Activated CD4-positive, alpha-beta T cell treated with anti-CD3 and anti-CD28 coated beads for 36 hours (primary cell): ENCODE measurements at regions of chr11 and their contacts with region 1.

Region 1: DNA sequence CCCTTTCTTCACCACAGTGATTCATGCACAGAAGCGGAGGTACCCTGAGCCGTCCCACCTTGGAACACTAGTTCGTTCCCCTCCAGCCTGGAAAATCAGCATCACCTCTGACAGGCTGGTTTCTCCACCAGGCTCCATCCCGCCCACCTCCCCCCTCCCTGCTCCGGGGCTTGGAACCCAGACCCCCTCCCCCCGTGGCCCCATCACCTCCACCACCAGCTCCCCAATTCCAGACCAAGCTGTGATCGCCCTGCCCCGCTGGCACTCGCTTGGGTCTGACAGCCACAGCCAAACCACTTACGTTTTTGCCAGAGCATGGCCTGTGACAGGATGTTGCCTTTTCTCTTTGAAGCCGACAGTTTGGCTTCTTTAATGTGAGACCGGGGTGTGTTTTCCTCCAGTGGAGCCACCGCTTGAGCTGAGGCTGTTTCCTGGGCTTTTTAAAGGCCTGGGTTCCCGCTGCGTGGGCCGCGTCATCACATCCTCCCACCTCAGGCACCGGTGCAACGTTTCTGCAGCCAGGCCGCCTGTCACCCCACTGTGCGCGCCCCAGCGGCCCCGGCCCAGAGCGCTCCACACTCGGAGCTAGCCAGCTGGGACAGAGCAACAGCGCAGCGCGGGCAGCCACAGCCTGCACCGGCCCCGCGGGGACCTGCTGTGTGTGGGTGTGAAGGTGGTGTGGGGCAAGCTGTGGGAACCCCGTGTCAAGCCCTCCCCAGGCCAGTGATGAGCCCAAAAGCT is at the start of gene POU2AF1:
- DNase-seq: peak; percentile 91
- ATAC-seq: peak; percentile 77
- H3K4me3 Mint-ChIP-seq: peak within 1 kb of the TSS; percentile 69
- H3K27ac Mint-ChIP-seq: peak within 1 kb of the TSS; percentile 74
- H3K4me1 Mint-ChIP-seq: peaks cover 61% of the 10 kb centered on the region
- H3K27me3 Mint-ChIP-seq: no peaks in the 10 kb centered on the region
- total RNA-seq, gene POU2AF1: 9.6 to 10.0 TPM

Region 2: DNA sequence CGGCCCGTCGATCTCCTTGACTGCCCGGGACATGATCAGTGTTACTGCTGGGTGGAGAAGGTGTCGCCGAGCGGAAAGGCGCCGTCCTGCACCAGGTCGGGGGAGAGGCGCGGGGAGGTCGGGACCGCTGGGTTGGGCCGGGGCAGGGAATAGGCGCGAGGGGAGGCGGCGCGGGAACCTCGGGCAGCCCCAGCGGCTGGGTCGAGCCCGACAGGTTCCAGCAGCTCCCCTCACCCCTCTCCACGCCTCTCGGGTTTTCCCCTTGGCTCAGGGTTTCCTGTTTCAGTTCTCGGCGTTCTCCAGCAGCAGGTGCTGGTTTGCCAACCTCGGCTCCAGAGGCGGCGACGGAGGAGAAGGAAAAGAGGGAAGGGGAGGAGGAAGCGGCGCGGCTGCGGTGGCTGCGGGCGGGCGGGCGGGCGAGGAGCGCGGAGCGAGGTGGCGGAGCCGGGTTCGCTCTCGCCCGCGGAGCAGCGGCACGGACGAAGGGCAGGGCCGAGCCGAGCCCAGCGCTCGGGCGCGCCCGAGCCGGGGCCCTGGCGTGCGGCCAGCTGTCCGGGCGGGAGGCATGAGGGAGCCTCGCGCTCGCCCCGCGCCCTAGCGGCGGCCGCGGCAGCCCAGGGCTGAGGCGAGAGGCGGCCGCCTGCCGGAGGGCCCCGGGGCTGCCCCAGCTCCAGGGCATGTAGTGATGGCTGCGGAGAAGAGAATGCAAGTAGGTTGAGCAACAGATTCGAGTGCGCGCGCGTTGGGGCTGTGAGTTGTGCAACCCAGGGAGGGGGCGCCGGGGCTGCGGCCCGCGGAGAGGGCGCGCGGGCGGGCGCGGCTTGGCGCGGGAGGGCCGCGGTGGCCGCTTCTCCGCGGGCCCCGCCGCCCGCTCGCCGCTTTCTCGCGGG is 1286.3 kb before region 1 on chr11 and contains the start of gene ZC3H12C:
- CTCF ChIA-PET with region 1: no interaction called
- POLR2A ChIA-PET with region 1: no interaction called
- intact Hi-C with region 1: loop called in 1 of 2 experiments (anchors 10 kb)
- DNase-seq: peak; percentile 74
- ATAC-seq: peak; percentile 73
- H3K4me3 Mint-ChIP-seq: peak within 1 kb of the TSS; percentile 74
- H3K27ac Mint-ChIP-seq: peak within 1 kb of the TSS; percentile 52
- H3K4me1 Mint-ChIP-seq: peaks cover 10% of the 10 kb centered on the region
- H3K27me3 Mint-ChIP-seq: peaks cover 49% of the 10 kb centered on the region
- total RNA-seq, gene ZC3H12C: 1.6 TPM

Region 3: DNA sequence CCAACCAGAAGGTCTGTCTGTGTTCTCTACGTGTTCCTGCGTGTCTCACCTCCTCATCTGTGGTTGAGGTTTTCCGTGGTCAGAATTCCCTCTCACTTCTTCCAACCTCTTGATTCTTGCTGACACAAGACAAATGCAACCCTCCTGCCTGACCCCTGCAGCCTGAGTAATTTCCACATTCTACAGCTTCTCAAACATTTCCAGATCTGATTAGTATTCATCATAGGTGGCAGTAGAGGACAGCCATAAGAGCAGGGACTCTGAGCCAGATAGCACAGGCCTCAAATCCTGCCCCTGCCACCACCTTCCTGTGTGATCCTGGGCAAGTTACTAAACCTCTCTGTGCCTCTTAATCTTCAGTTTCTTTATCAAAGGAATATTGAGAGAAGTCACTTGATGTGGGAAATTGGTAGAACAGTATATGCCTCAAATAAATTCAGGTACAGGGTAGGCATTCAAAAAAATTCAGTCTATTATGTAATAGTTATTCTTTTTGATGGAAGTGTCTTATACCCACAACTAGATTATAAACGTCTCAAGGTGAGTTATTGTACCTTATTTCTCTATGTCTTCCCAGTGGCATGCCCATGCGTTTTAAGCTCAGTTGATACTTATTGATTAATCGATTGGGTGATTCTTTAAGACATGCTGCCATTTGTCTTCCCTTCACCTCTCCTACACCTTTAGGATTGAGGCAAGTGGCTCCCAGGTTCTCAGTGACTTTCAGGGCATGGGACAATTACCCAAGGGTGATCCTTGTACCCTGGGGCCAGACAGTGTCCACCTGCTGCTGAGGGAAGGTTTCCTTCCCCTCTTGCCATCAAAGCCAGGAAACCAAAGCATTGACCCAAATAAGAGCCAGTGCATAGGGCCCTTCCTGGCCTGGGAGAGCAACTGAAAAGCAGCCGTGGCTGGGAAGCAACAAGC is 19.5 kb before region 1 on chr11:
- CTCF ChIA-PET with region 1: no interaction called
- POLR2A ChIA-PET with region 1: no interaction called
- intact Hi-C with region 1: loop called in 1 of 2 experiments (anchors 2 kb)
- DNase-seq: peak; percentile 39
- ATAC-seq: peak; percentile 83
- H3K4me3 Mint-ChIP-seq: no peak overlapping the region
- H3K27ac Mint-ChIP-seq: no peak overlapping the region
- H3K4me1 Mint-ChIP-seq: peaks cover 2% of the 10 kb centered on the region
- H3K27me3 Mint-ChIP-seq: no peaks in the 10 kb centered on the region

Region 4: GRCh38 chr11:111422494-111423249 is 43.6 kb after region 1 on chr11:
- CTCF ChIA-PET with region 1: interaction called, 3 read pairs
- POLR2A ChIA-PET with region 1: no interaction called
- intact Hi-C with region 1: loop called in 1 of 2 experiments (anchors 1 kb)
- DNase-seq: peak; percentile 81
- ATAC-seq: peak; percentile 94
- H3K4me3 Mint-ChIP-seq: no peak overlapping the region
- H3K27ac Mint-ChIP-seq: no peak overlapping the region
- H3K4me1 Mint-ChIP-seq: peaks cover 4% of the 10 kb centered on the region
- H3K27me3 Mint-ChIP-seq: no peaks in the 10 kb centered on the region

Region 5: DNA sequence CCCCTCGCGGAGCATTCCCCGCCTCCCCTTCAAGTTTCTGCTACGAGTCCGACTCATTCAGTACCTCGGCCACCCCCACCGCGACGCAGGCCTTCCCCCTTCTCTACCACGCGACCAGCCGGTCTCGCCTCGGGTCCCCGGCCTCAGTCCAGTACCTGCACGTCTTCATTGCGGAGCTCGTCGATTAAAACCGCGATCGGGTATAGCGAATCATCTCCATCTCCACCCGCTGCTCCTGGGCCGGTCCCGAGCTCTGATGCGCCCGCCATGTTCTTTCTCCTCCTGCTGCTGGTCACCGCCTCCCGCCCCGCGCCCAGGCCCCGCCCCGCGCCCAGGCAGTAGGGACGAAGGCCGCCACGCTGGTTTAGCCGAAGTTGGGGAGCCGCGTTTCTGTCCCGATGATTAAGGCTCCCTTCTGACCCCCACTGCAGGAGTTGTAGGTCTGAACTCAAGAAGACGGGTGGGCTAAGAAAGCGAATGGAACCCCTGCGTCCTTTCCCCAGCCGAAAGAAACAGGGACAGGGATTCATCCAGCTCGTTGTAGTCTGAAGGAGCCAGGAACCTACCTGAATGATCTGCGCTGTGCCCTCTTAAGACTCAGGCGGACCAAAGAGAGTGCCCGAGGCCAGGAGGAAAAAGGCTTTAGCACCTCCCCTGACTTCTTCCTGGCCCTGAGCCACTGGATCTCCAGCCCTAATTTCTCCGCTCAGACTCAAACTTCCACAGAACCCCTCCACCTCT is 387.2 kb after region 1 on chr11 and contains the start of gene PPP2R1B:
- CTCF ChIA-PET with region 1: no interaction called
- POLR2A ChIA-PET with region 1: no interaction called
- intact Hi-C with region 1: loop called in 1 of 2 experiments (anchors 10 kb)
- DNase-seq: peak; percentile 85
- ATAC-seq: peak; percentile 95
- H3K4me3 Mint-ChIP-seq: peak within 1 kb of the TSS; percentile 85
- H3K27ac Mint-ChIP-seq: peak within 1 kb of the TSS; percentile 98
- H3K4me1 Mint-ChIP-seq: peaks cover 32% of the 10 kb centered on the region
- H3K27me3 Mint-ChIP-seq: no peaks in the 10 kb centered on the region
- total RNA-seq, gene PPP2R1B: 39.1 to 53.9 TPM

Region 6: DNA sequence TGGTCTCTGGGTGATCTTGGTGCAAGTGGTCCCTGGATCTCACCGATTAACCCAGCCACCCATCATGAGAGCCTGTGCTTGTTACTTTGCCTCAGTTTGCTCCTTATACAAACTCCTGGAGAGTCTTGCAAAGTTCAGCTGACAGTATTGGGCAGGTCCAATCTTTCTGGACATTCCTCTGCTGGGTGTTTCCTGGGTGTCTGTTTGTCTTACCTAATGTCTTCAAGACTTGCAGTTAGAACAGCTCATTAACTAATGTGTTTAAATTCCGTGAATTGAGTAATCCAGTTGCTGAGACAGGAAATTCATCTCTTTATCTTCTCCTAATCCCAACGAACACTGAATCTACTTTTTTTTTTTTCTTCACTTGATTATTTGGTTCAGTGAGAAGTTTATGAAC is 816.9 kb after region 1 on chr11:
- CTCF ChIA-PET with region 1: no interaction called
- POLR2A ChIA-PET with region 1: no interaction called
- intact Hi-C with region 1: no loop called
- DNase-seq: no peak
- ATAC-seq: no peak
- H3K4me3 Mint-ChIP-seq: no peak overlapping the region
- H3K27ac Mint-ChIP-seq: no peak overlapping the region
- H3K4me1 Mint-ChIP-seq: peaks cover 2% of the 10 kb centered on the region
- H3K27me3 Mint-ChIP-seq: no peaks in the 10 kb centered on the region